Activated CD4-positive, alpha-beta memory T cell treated with anti-CD3 and anti-CD28 coated beads, Interleukin-2, amount 10 ng/mL, durations not matched to agents 7 days and 5 days (primary cell): ENCODE measurements at regions of chr18 and their contacts with region 1.

Region 1: GRCh38 chr18:35231052-35231451 is 9.8 kb upstream of the ZNF397 start:
- DNase-seq: peak; percentile 78
- H3K4me3 Mint-ChIP-seq: no peak overlapping the region
- H3K27ac Mint-ChIP-seq: no peak overlapping the region
- H3K4me1 Mint-ChIP-seq: peaks cover 3% of the 10 kb centered on the region
- H3K27me3 Mint-ChIP-seq: peaks cover 2% of the 10 kb centered on the region

Region 2: GRCh38 chr18:35117951-35118411 is 113.1 kb before region 1 on chr18:
- CTCF ChIA-PET with region 1: no interaction called
- POLR2A ChIA-PET with region 1: no interaction called
- DNase-seq: no peak
- H3K4me3 Mint-ChIP-seq: no peak overlapping the region
- H3K27ac Mint-ChIP-seq: no peak overlapping the region
- H3K4me1 Mint-ChIP-seq: no peaks in the 10 kb centered on the region
- H3K27me3 Mint-ChIP-seq: no peaks in the 10 kb centered on the region

Region 3: GRCh38 chr18:35215026-35215425 is 16.0 kb before region 1 on chr18:
- CTCF ChIA-PET with region 1: no interaction called
- POLR2A ChIA-PET with region 1: no interaction called
- DNase-seq: no peak
- H3K4me3 Mint-ChIP-seq: no peak overlapping the region
- H3K27ac Mint-ChIP-seq: no peak overlapping the region
- H3K4me1 Mint-ChIP-seq: no peaks in the 10 kb centered on the region
- H3K27me3 Mint-ChIP-seq: peaks cover 8% of the 10 kb centered on the region

Region 4: GRCh38 chr18:35355140-35355618 is 124.1 kb after region 1 on chr18:
- CTCF ChIA-PET with region 1: interaction called, 15 read pairs
- POLR2A ChIA-PET with region 1: interaction called, 3 read pairs
- DNase-seq: peak; percentile 52
- H3K4me3 Mint-ChIP-seq: no peak overlapping the region
- H3K27ac Mint-ChIP-seq: no peak overlapping the region
- H3K4me1 Mint-ChIP-seq: no peaks in the 10 kb centered on the region
- H3K27me3 Mint-ChIP-seq: no peaks in the 10 kb centered on the region

Region 5: DNA sequence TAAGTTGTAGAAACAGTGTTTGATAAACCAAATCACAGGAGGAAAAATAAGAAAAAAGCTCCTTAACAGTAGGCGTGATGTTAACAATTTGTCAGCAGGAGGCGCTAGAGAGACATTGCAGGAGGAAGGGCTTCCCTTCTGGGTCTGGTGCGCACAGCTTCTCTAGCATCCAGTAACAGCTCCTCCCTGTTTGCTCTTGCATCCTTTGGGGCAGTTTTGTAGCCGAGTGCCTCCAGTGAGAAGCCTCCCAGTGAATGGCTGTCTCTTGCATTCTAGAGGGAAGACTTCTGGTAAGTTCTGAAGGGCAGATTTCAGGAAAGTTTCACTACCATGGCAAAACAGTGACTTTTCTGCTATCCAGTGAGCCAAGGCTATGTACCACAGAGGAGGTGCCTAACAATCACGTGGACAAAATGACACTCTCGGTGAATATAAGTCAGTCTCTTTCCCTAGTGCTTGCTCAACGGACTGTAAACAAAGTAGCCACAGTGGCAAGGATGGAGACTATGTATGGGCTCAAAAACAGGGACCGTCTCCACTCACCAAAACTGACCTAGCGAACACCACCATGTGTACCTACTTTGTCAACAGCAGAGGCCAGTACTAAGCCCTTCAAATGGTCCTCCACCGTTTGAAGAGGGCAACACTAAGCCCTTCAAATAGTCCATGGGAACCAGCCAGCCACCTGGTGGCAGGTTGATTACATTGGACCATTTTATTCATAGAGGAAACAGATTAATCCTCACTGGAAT is 155.7 kb after region 1 on chr18:
- CTCF ChIA-PET with region 1: interaction called, 13 read pairs
- POLR2A ChIA-PET with region 1: no interaction called
- DNase-seq: peak; percentile 67
- H3K4me3 Mint-ChIP-seq: no peak overlapping the region
- H3K27ac Mint-ChIP-seq: no peak overlapping the region
- H3K4me1 Mint-ChIP-seq: peaks cover 4% of the 10 kb centered on the region
- H3K27me3 Mint-ChIP-seq: peaks cover 35% of the 10 kb centered on the region